Common myeloid progenitor, CD34-positive (primary cell): ENCODE measurements at regions of chr17 and their contacts with region 1.

Region 1: DNA sequence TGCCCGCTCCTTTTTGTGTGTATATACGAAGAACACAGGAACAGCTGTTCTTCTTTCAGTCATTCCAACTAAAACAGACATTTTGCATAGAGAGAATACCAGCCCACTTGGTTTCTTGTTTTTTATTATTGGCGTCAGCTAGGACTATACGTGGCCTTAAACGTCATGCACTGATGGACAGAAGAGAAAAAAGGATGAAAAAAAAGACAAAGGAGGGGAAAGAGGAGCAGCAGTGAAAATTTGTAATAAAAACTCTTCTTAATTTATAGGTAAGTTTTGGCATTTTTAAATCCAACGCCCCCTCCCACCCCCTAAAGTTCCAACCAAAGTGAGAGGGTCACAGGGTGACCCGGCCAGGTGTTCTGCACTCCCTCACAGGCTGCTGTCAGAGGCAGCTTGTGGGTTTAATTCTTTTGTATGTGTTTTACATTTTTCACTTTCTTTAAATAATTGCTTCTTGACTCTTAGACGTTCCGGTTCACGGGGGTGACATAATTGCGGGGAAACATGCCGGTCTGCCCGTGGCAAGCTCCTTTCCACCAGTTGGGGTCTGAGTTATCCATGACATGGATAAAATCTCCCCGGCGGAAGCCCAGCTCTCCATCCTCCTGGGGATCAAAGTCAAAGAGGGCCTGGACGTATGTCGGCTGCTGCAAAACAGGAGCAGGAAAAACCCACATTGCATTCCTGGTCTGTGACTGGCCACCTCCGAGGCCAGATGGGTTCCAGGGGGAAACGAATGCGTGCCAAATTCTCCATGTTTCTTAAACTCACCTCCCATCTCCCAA is 30.9 kb upstream of the SLC25A19 start:
- DNase-seq: no peak
- H3K4me3 ChIP-seq: no peak overlapping the region
- H3K27ac ChIP-seq: peak overlapping the region in 1 of 2 experiments; percentile 20
- H3K4me1 ChIP-seq: peaks cover 4 to 29% (median 18%) of the 10 kb centered on the region in 4 experiments
- H3K27me3 ChIP-seq: no peaks in the 10 kb centered on the region

Region 2: GRCh38 chr17:75289115-75289831 is 30.8 kb before region 1 on chr17 and contains the start of gene SLC25A19:
- CTCF ChIA-PET with region 1: interaction called, 34 read pairs
- POLR2A ChIA-PET with region 1: no interaction called
- DNase-seq: peak; percentile 99 to 100 (median 99)
- H3K4me3 ChIP-seq: peak within 1 kb of the TSS; percentile 80 to 98 (median 94)
- H3K27ac ChIP-seq: peak within 1 kb of the TSS; percentile 94 to 98
- H3K4me1 ChIP-seq: peaks cover 8 to 34% (median 17%) of the 10 kb centered on the region in 4 experiments
- H3K27me3 ChIP-seq: no peaks in the 10 kb centered on the region

Region 3: GRCh38 chr17:75338335-75338734 is 18.2 kb after region 1 on chr17:
- CTCF ChIA-PET with region 1: interaction called, 32 read pairs
- POLR2A ChIA-PET with region 1: no interaction called
- DNase-seq: peak in 2 of 3 donors; percentile 64 to 74
- H3K4me3 ChIP-seq: peak overlapping the region in 6 of 7 experiments; percentile 22 to 50 (median 42)
- H3K27ac ChIP-seq: peak overlapping the region; percentile 18 to 82
- H3K4me1 ChIP-seq: peaks cover 38 to 90% (median 80%) of the 10 kb centered on the region in 4 experiments
- H3K27me3 ChIP-seq: no peaks in the 10 kb centered on the region

Region 4: DNA sequence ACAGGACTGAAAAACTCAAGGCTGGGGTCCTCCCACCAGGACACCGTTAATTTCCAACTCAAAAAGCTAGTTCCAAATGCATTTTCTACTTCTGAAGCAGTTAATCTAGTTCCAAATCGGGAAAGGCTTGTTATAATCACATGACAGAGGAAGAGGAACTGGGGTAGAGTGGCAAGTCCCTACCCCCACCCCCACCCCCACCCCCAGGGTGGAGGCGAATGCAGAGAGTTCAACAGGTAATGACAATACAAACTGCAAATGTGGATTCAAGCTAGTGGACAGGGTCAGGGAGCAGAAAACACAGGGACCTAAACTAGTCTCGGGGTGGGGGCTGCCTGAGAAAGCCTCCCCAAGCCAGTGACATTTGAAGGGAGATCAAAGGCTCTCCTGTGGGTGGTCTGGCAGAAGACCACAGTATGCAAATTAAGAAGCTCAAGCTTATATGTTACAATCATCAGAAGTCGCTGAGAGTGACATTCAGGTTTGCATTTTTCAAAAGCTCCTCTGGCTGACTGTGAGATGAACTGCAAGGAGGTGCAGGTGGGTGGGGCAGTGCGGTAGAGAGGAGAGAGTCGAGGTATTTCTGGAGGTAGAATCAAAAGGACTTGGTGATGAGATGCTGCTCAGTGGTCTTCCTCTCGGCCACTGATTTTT is 25.5 kb after region 1 on chr17:
- CTCF ChIA-PET with region 1: interaction called, 12 read pairs
- POLR2A ChIA-PET with region 1: no interaction called
- DNase-seq: peak in 2 of 3 donors; percentile 67 to 74
- H3K4me3 ChIP-seq: peak overlapping the region in 5 of 7 experiments; percentile 32 to 55 (median 37)
- H3K27ac ChIP-seq: peak overlapping the region; percentile 15 to 80
- H3K4me1 ChIP-seq: peaks cover 42 to 99% (median 84%) of the 10 kb centered on the region in 4 experiments
- H3K27me3 ChIP-seq: no peaks in the 10 kb centered on the region

Region 5: GRCh38 chr17:75400326-75400939 is 80.3 kb after region 1 on chr17:
- CTCF ChIA-PET with region 1: interaction called, 26 read pairs
- POLR2A ChIA-PET with region 1: interaction called, 3 read pairs
- DNase-seq: no peak
- H3K4me3 ChIP-seq: no peak overlapping the region
- H3K27ac ChIP-seq: no peak overlapping the region
- H3K4me1 ChIP-seq: peaks cover 9 to 44% (median 22%) of the 10 kb centered on the region in 4 experiments
- H3K27me3 ChIP-seq: no peaks in the 10 kb centered on the region

Region 6: DNA sequence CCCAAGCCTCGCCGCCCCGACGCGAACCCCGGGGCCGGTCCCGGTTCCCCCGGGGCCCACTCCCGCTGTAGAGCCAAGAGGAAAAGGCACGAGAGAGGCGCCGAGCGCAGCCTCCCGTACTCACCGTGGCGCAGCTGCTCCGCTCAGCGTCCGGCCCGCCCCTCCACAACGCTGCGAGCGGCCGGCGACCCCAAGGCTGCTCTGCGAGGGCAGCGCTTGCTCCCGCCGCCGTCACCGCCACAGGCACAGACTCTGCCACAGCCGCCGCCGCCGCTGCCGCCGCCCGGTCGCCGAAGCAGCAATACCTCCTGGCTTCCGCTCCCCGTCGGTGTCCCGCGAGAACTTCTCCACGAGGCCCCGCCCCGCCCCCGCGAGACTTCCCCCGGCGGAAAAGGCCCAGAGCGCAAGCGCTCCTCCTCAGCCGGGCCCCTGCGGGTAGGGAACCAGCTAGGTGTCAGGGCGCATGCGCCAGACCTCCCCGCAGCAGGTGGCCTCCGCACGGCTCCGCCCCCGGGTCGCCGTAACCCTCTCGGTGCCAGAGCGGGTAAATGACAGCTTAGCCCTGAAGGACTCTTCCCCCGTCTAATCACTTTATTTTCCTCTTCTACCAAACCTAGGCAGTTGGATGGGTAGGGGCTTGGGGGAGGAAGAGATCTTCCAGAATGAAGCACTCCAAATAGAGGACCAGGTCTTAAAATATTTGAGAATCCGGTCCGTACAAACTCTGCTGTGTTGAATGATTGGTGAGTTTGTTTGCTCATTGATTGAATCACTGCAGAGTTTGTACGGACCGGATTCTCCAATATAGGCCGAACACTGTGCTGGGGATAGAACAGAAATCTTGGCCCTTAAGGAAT is 85.5 kb after region 1 on chr17 and contains the start of gene GRB2:
- CTCF ChIA-PET with region 1: interaction called, 26 read pairs
- POLR2A ChIA-PET with region 1: no interaction called
- DNase-seq: peak; percentile 97 to 98 (median 98)
- H3K4me3 ChIP-seq: peak within 1 kb of the TSS; percentile 93 to 100 (median 98)
- H3K27ac ChIP-seq: peak within 1 kb of the TSS; percentile 85 to 90
- H3K4me1 ChIP-seq: peaks cover 18 to 52% (median 37%) of the 10 kb centered on the region in 4 experiments
- H3K27me3 ChIP-seq: no peaks in the 10 kb centered on the region

Region 7: DNA sequence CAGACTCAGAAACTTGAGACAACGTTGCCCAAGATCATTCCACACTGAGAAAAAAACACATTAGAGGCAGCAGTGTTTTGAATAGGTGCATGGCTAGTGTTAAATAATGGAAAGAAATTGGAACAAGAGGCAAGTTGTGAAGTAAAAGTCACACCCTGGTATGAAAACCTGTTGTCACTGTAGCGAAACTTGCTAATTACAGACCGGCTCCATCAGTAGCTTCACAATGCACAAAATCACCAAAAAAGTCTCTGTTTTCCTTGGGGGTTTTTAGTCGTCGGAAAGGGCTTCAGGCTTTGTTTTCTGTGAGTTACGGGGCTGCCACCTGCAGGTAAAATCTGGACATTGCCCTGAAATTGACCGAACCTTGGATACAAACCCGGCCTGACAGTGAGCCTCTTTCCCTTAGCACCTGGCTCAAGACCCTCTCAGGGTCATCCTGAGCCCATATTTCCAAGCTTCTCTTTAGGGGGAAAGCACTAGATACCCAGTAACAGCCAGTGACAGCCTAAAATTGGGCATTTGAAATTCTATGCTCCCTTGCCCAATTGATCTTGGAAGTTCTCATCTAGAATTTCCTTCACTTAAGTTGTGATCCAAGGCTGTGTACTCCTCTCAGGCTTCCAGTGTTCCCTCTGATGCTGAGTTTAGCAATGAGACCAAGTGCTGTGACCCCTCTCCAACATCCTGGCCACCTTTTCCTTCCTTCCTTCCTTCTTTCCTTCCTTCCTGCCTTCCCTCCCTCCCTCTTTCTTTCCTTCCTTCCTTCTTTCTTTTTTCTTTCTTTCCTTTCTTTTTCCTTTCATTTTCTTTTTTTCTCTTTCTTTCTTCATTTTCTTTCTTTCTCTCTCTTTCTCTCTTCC is 92.6 kb after region 1 on chr17:
- CTCF ChIA-PET with region 1: interaction called, 30 read pairs
- POLR2A ChIA-PET with region 1: interaction called, 4 read pairs
- DNase-seq: peak; percentile 83 to 93 (median 88)
- H3K4me3 ChIP-seq: peak overlapping the region in 3 of 7 experiments; percentile 30 to 63 (median 32)
- H3K27ac ChIP-seq: no peak overlapping the region
- H3K4me1 ChIP-seq: peaks cover 3 to 38% (median 28%) of the 10 kb centered on the region in 4 experiments
- H3K27me3 ChIP-seq: no peaks in the 10 kb centered on the region